Heart left ventricle (tissue), 16 donors: ENCODE measurements at regions of chr16 and their contacts with region 1.

Region 1: GRCh38 chr16:3553138-3553923 is 23.9 kb downstream of the NLRC3 start:
- DNase-seq: no peak
- ATAC-seq: no peak
- H3K4me3 ChIP-seq: no peak overlapping the region
- H3K27ac ChIP-seq: no peak overlapping the region
- H3K4me1 ChIP-seq: peaks cover 0 to 6% (median 0%) of the 10 kb centered on the region in 12 donors
- H3K27me3 ChIP-seq: no peaks in the 10 kb centered on the region
- CTCF ChIP-seq: no peak
- POLR2A ChIP-seq: no peak

Region 2: GRCh38 chr16:3509470-3509928 is 43.8 kb before region 1 on chr16:
- intact Hi-C with region 1: no loop called
- DNase-seq: no peak
- ATAC-seq: no peak
- H3K4me3 ChIP-seq: no peak overlapping the region
- H3K27ac ChIP-seq: peak overlapping the region in 1 of 12 donors; percentile 42
- H3K4me1 ChIP-seq: peaks cover 0 to 10% (median 0%) of the 10 kb centered on the region in 12 donors
- H3K27me3 ChIP-seq: no peaks in the 10 kb centered on the region
- CTCF ChIP-seq: no peak
- POLR2A ChIP-seq: no peak

Region 3: DNA sequence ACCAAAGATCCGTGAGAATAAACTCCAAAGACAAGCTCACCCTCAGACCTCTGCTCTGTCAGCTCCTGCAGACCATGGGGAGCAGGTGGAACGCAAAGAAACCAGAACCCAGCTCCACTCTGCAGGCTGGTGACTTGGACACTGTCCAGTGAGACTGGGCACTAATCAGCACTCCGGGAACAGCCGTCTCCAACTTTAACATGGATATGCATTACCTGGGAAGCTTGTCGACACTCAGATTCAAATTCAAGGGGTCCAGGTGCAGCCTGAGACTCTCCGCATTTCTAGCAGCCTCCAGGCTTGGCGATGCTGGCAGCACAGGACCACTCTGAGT is 49.0 kb after region 1 on chr16:
- intact Hi-C with region 1: loop called in 1 of 10 experiments (anchors 5 kb)
- DNase-seq: no peak
- ATAC-seq: peak in 3 of 4 donors; percentile 40 to 62 (median 53)
- H3K4me3 ChIP-seq: no peak overlapping the region
- H3K27ac ChIP-seq: no peak overlapping the region
- H3K4me1 ChIP-seq: peaks cover 0 to 7% (median 0%) of the 10 kb centered on the region in 12 donors
- H3K27me3 ChIP-seq: no peaks in the 10 kb centered on the region
- CTCF ChIP-seq: no peak
- POLR2A ChIP-seq: no peak